Tibial artery (tissue), 4 donors: ENCODE measurements at regions of chr2 and their contacts with region 1.

Region 1: GRCh38 chr2:65974067-65974723 is 460.7 kb upstream of the MEIS1 start:
- DNase-seq: no peak
- H3K4me3 ChIP-seq: no peak overlapping the region
- H3K27ac ChIP-seq: no peak overlapping the region
- H3K4me1 ChIP-seq: no peaks in the 10 kb centered on the region
- H3K27me3 ChIP-seq: no peaks in the 10 kb centered on the region
- CTCF ChIP-seq: no peak

Region 2: GRCh38 chr2:65153514-65153913 is 820.7 kb before region 1 on chr2:
- intact Hi-C with region 1: no loop called
- DNase-seq: no peak
- H3K4me3 ChIP-seq: no peak overlapping the region
- H3K27ac ChIP-seq: no peak overlapping the region
- H3K4me1 ChIP-seq: no peaks in the 10 kb centered on the region
- H3K27me3 ChIP-seq: no peaks in the 10 kb centered on the region
- CTCF ChIP-seq: no peak

Region 3: GRCh38 chr2:65952951-65953350 is 21.2 kb before region 1 on chr2:
- intact Hi-C with region 1: loop called (anchors 2 kb)
- DNase-seq: no peak
- H3K4me3 ChIP-seq: no peak overlapping the region
- H3K27ac ChIP-seq: no peak overlapping the region
- H3K4me1 ChIP-seq: no peaks in the 10 kb centered on the region
- H3K27me3 ChIP-seq: peaks cover 0 to 5% of the 10 kb centered on the region in 2 donors
- CTCF ChIP-seq: no peak

Region 4: GRCh38 chr2:66240286-66240685 is 266.1 kb after region 1 on chr2:
- intact Hi-C with region 1: no loop called
- DNase-seq: peak in 1 of 2 donors; percentile 23
- H3K4me3 ChIP-seq: no peak overlapping the region
- H3K27ac ChIP-seq: no peak overlapping the region
- H3K4me1 ChIP-seq: peaks cover 0 to 12% (median 7%) of the 10 kb centered on the region in 4 donors
- H3K27me3 ChIP-seq: no peaks in the 10 kb centered on the region
- CTCF ChIP-seq: no peak